Left ventricle myocardium superior (tissue), 1 donor: ENCODE measurements at regions of chr5 and their contacts with region 1.

Region 1: DNA sequence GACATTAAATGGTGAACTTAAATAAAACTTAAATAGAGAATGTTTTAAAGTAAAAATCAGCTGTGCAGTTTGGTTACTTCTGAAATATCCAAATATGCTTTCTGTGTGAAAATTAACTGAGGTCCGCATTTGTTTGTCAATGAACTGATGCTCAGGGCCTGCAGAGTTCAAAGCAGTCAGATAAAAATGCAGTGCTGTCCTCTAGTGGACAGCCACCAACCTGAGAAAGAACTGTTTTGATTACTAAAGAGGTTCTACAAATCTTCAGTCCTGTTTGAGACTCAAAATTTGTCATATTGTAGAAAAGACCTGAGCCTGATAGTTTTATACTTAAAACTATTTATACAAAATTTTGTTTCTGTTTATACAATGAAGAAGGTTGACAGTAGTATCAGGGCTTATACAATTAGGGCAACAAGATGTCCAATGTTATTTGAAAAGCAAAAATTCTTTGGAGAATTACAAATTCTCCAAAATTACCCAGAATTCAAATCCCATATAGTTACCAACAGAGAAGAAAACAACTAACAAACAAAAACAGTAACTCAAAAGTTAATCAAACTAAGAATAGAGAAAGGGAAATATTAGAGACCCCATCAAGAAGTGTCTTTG is 232.3 kb upstream of the TBCA start:
- DNase-seq: no peak
- ATAC-seq: no peak

Region 2: DNA sequence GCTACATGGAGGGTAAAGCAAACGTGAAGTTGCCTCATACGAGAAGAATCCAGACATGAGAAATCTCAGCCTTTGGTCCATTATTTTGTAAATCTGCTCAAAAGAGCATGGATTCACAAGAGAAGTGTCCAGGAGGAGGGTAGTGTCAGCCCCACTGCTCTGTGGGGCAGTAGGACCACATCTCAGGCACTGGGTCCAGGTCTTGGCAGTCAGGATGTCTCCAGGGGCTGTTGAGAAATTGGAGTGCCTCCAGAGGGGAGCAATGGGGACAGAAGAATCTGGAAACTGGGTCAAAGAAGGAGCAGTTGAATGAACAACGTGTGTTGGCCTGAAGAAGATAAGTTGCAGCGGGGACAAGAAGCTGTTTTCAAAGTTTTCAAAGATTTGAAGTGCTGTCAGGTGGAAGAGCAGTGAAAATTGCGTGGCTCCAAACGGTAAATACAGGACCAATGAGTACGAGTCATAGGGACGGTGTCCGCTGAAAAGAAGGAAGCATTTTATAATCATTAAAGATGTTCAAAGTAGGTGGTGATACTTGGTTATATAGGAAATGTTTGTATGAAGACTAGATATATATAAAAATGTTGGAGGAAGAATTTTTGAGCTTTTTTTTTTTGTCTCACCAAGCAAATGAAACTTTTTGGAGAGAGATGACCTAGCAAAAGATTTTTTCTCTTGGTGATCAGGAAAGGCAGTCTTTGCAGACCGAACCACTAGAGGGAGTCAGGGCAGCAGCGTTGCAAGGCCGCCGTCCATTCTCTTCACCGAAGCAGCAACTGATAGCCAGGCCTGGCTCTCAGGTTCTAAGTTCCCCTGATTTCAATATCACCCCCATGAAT is 864.2 kb before region 1 on chr5:
- intact Hi-C with region 1: no loop called
- DNase-seq: peak; percentile 64
- ATAC-seq: peak; percentile 81

Region 3: DNA sequence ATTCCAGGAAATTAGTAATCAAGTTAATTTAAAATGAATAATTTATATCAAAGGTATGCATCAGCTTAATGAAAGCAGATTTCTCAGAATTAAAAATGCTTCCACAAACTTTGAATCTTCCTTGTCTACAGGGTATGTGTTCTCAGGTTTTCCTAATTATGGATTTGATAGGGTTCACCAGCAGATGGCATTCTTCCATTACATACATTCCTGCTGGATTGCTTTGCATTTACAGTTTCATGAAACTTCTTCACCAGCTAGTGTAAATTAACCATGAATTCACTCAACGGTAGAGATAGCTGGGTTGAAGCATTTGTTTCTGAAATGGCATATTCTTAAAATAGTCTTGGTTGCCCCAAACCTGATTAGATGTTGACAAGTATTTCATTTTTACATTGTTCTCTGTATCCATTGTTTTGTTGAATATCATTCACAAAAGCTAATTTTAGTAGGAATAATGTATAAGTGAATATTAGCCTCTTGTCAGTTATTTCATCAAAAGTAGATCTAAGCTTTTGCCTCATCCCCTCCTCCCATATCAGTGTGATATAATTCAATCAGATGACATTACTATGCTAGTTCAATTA is 447.7 kb before region 1 on chr5:
- intact Hi-C with region 1: loop called (anchors 10 kb)
- DNase-seq: no peak
- ATAC-seq: no peak

Region 4: GRCh38 chr5:77972469-77973252 is 35.8 kb before region 1 on chr5:
- intact Hi-C with region 1: no loop called
- DNase-seq: peak; percentile 27
- ATAC-seq: peak; percentile 38